ENCODE measurements at regions of chr2 and their contacts with region 1.

Region 1: GRCh38 chr2:45681675-45682074 is 30.2 kb downstream of the PRKCE start:
- DNase-seq: peak; percentile 85
- H3K4me3 ChIP-seq: no peak overlapping the region
- H3K27ac ChIP-seq: no peak overlapping the region
- H3K4me1 ChIP-seq: peaks cover 22% of the 10 kb centered on the region
- H3K27me3 ChIP-seq: no peaks in the 10 kb centered on the region
- CTCF ChIP-seq: no peak
- POLR2A ChIP-seq: no peak

Region 2: GRCh38 chr2:45554073-45554741 is 127.5 kb before region 1 on chr2:
- CTCF ChIA-PET with region 1: no interaction called
- POLR2A ChIA-PET with region 1: no interaction called
- dilution Hi-C with region 1: no loop called
- intact Hi-C with region 1: no loop called
- DNase-seq: no peak
- H3K4me3 ChIP-seq: no peak overlapping the region
- H3K27ac ChIP-seq: no peak overlapping the region
- H3K4me1 ChIP-seq: no peaks in the 10 kb centered on the region
- H3K27me3 ChIP-seq: no peaks in the 10 kb centered on the region
- CTCF ChIP-seq: no peak
- POLR2A ChIP-seq: no peak

Region 3: GRCh38 chr2:45669032-45669486 is 12.6 kb before region 1 on chr2:
- CTCF ChIA-PET with region 1: interaction called, 3 read pairs
- POLR2A ChIA-PET with region 1: no interaction called
- dilution Hi-C with region 1: no loop called
- intact Hi-C with region 1: loop called (anchors 1 kb)
- DNase-seq: peak; percentile 96
- H3K4me3 ChIP-seq: peak overlapping the region in 1 of 3 experiments; percentile 46
- H3K27ac ChIP-seq: peak overlapping the region; percentile 93
- H3K4me1 ChIP-seq: peaks cover 16% of the 10 kb centered on the region
- H3K27me3 ChIP-seq: no peaks in the 10 kb centered on the region
- CTCF ChIP-seq: no peak
- POLR2A ChIP-seq: peak; percentile 80

Region 4: GRCh38 chr2:45724335-45724734 is 42.7 kb after region 1 on chr2:
- CTCF ChIA-PET with region 1: no interaction called
- POLR2A ChIA-PET with region 1: no interaction called
- dilution Hi-C with region 1: no loop called
- intact Hi-C with region 1: loop called (anchors 5 kb)
- DNase-seq: no peak
- H3K4me3 ChIP-seq: no peak overlapping the region
- H3K27ac ChIP-seq: no peak overlapping the region
- H3K4me1 ChIP-seq: no peaks in the 10 kb centered on the region
- H3K27me3 ChIP-seq: no peaks in the 10 kb centered on the region
- CTCF ChIP-seq: no peak
- POLR2A ChIP-seq: no peak